Right cardiac atrium (tissue), 5 donors: ENCODE measurements at regions of chr5 and their contacts with region 1.

Region 1: GRCh38 chr5:54310433-54311175 is at the start of gene ARL15:
- DNase-seq: peak; percentile 99 to 100 (median 99)
- ATAC-seq: peak; percentile 99
- H3K4me3 ChIP-seq: peak within 1 kb of the TSS; percentile 81
- H3K27ac ChIP-seq: peak within 1 kb of the TSS; percentile 93
- H3K4me1 ChIP-seq: no peaks in the 10 kb centered on the region
- H3K27me3 ChIP-seq: no peaks in the 10 kb centered on the region
- total RNA-seq, gene ARL15: 24.0 to 30.3 (median 25.1) TPM

Region 2: DNA sequence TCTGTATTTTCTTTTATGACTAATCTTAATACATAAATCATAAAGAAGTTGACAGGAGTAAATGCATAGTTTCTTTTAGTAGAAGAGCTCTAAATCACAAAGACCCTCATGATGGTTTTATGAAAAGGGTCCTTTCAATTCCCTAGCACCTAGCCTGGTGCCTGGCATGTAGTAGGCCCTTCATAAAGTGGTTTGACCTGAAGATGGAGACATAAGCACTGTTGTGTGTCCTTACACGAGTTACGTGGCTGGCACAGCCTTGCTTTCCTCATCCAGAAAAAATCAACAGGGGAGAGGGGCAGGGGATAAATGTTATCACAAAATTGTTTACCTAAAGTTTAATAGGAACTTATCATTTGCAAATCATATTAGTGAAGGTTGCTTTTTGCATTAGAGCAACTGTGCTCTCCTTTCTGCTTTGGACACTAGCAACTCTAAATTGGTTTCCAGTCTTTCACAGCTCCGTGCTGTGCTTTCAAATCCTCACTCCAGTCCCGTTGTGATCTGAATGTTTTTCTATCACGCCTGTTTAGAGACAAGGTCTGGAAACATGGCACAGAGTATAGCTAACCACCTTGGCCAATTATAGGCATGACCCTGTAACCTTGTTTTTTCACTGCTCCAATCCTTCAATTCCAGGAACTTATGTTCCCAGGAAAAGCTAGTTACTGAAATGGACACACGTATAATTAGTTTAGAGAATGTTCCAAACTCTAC is 56.0 kb before region 1 on chr5:
- intact Hi-C with region 1: loop called in 3 of 4 experiments (anchors 5 to 10 kb)
- DNase-seq: peak in 2 of 3 donors; percentile 21 to 63
- ATAC-seq: peak; percentile 84 to 89
- H3K4me3 ChIP-seq: peak overlapping the region; percentile 11
- H3K27ac ChIP-seq: no peak overlapping the region
- H3K4me1 ChIP-seq: no peaks in the 10 kb centered on the region
- H3K27me3 ChIP-seq: no peaks in the 10 kb centered on the region

Region 3: GRCh38 chr5:54415896-54416601 is 105.4 kb after region 1 on chr5:
- intact Hi-C with region 1: loop called in 2 of 4 experiments (anchors 5 to 10 kb)
- DNase-seq: no peak
- ATAC-seq: no peak
- H3K4me3 ChIP-seq: no peak overlapping the region
- H3K27ac ChIP-seq: no peak overlapping the region
- H3K4me1 ChIP-seq: no peaks in the 10 kb centered on the region
- H3K27me3 ChIP-seq: no peaks in the 10 kb centered on the region

Region 4: GRCh38 chr5:54492178-54492577 is 181.6 kb after region 1 on chr5:
- intact Hi-C with region 1: loop called in 1 of 4 experiments (anchors 10 kb)
- DNase-seq: no peak
- ATAC-seq: peak; percentile 24 to 34
- H3K4me3 ChIP-seq: no peak overlapping the region
- H3K27ac ChIP-seq: no peak overlapping the region
- H3K4me1 ChIP-seq: no peaks in the 10 kb centered on the region
- H3K27me3 ChIP-seq: no peaks in the 10 kb centered on the region